CD4-positive, alpha-beta T cell (primary cell): ENCODE measurements at regions of chr1 and their contacts with region 1.

Region 1: DNA sequence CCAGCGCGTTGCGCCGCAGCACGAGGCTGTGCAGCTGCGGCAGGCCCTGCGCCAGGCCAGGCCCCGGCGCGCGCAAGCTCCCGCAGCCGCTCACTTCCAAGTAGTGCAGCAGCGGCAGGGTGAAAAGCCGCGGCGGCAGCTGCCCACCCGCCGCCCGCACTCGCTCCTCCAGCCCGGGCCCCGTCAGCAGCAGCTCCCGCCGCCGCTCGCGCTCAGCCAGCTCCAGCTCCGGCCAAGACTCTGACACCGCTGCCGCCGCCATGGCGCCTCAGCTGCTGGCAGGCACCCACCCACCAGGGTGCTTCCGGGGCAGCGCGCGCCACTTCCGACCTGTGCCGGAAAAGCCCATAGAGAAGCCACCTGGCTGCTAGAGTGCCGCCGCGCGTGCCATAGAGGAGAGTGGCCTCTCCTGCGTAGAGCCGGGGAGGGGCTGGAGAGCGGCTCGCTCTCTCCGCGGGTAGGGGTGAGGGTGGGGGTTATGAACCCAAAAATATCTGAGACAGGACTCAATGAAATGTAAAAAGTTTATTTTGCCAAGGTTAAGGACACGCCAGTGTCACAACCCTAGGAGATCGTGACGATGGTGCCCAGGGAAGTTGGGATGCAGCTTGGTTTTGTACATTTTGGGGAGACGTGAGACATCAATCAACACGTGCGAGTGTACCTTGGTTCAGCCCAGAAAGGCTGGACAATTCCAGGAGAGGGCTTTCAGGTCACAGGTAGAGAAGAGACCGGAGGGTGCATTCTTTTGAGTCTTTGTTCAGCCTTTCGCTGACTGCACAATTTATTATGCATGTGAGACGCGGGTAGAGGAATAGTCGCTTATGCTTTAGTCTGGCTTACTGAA is at the start of gene LRRC47:
- DNase-seq: peak; percentile 92 to 96 (median 94)
- ATAC-seq: peak; percentile 100
- H3K4me3 ChIP-seq: peak within 1 kb of the TSS; percentile 73
- H3K4me3 Mint-ChIP-seq: peak within 1 kb of the TSS; percentile 95
- H3K27ac ChIP-seq: peak within 1 kb of the TSS in 1 of 2 donors; percentile 52
- H3K27ac Mint-ChIP-seq: peak within 1 kb of the TSS; percentile 82
- H3K4me1 ChIP-seq: peaks cover 40% of the 10 kb centered on the region
- H3K4me1 Mint-ChIP-seq: peaks cover 54% of the 10 kb centered on the region
- H3K27me3 ChIP-seq: peaks cover 4 to 7% of the 10 kb centered on the region in 2 experiments
- H3K27me3 Mint-ChIP-seq: peaks cover 18% of the 10 kb centered on the region
- CTCF ChIP-seq: no peak
- total RNA-seq, gene LRRC47: 30.1 to 32.0 TPM

Region 2: DNA sequence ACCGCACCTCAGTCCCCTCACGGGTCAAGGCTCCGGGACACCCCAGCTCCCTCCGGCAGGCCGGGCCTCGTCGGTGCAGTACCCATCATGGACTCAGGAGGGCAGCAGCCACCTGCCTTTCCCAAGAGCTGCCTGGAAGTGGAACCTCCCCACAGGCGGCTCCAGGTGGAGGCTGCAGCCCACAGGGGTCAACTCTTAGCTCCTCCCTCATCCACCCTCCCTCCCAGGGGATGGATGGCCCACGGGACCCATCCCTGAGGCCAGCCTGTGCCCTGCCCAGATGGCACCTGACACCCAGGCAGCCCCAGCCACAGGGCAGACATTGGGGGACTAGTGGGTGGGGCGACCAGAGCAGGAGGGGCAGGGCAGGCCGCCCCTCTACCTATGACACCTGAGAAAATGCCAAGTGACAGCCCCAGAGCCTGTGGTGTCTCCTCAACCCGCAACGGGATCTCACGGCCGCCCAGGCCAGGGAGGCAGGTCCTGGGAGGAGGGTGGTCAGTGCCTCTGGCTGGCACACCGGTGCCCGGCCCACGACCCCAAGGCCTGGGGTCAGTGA is 343.2 kb before region 1 on chr1:
- CTCF ChIA-PET with region 1: interaction called, 3 read pairs
- POLR2A ChIA-PET with region 1: no interaction called
- intact Hi-C with region 1: loop called in 1 of 2 experiments (anchors 5 kb)
- DNase-seq: peak; percentile 58 to 83 (median 68)
- ATAC-seq: peak; percentile 85
- H3K4me3 ChIP-seq: no peak overlapping the region
- H3K4me3 Mint-ChIP-seq: peak overlapping the region; percentile 81
- H3K27ac ChIP-seq: no peak overlapping the region
- H3K27ac Mint-ChIP-seq: no peak overlapping the region
- H3K4me1 ChIP-seq: peaks cover 22% of the 10 kb centered on the region
- H3K4me1 Mint-ChIP-seq: peaks cover 3% of the 10 kb centered on the region
- H3K27me3 ChIP-seq: peaks cover 19 to 21% of the 10 kb centered on the region in 2 experiments
- H3K27me3 Mint-ChIP-seq: peaks cover 18% of the 10 kb centered on the region
- CTCF ChIP-seq: peak; percentile 93

Region 3: GRCh38 chr1:3639397-3639911 is 157.0 kb before region 1 on chr1:
- CTCF ChIA-PET with region 1: no interaction called
- POLR2A ChIA-PET with region 1: no interaction called
- intact Hi-C with region 1: no loop called
- DNase-seq: no peak
- ATAC-seq: no peak
- H3K4me3 ChIP-seq: no peak overlapping the region
- H3K4me3 Mint-ChIP-seq: no peak overlapping the region
- H3K27ac ChIP-seq: no peak overlapping the region
- H3K27ac Mint-ChIP-seq: no peak overlapping the region
- H3K4me1 ChIP-seq: no peaks in the 10 kb centered on the region
- H3K4me1 Mint-ChIP-seq: no peaks in the 10 kb centered on the region
- H3K27me3 ChIP-seq: no peaks in the 10 kb centered on the region
- H3K27me3 Mint-ChIP-seq: no peaks in the 10 kb centered on the region
- CTCF ChIP-seq: no peak

Region 4: DNA sequence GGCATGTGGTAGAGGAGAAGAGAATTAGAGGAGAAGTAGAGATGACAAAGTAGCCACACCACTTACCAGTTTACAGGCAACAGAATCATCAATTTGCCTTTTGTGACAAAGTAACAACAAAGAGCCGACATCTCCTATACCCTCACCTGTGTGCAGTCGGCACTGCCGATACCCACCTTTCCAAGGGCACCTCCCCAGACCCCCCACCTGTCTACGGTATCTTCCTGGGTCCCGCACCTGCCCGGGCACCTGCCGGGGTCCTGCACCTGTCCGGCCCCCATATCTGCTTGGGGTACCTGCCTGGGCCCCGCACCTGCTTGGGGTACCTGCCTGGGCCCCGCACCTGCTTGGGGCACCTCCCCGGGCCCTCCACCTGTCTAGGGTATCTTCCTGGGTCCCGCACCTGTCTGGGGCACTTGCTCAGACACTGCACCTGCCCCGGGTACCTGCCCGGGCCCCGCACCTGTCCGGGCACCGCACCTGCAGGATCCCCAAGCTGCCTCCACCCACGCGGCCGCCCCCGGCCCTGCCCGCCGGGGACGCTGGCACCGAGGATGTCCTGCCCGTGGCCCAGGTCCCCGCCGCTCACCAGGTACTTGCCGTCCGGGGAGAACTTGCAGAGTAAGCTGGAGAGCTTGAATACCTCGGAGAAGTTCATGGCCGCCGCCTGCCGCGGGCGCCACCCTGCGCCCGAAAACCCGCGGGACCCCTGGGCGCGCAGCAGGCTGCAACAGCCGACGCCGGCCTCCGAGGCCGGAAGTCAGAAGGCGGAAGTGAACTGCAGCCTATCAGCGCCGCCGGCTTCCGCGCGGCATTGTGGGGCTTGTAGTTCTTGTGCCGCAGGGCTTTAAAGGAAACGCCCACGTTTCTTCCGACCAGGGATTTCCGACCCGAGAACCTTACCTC is 146.8 kb before region 1 on chr1 and contains the start of gene WRAP73:
- CTCF ChIA-PET with region 1: no interaction called
- POLR2A ChIA-PET with region 1: no interaction called
- intact Hi-C with region 1: loop called in 1 of 2 experiments (anchors 2 kb)
- DNase-seq: peak; percentile 79 to 96 (median 85)
- ATAC-seq: peak; percentile 97
- H3K4me3 ChIP-seq: peak within 1 kb of the TSS; percentile 84
- H3K4me3 Mint-ChIP-seq: peak within 1 kb of the TSS; percentile 86
- H3K27ac ChIP-seq: peak within 1 kb of the TSS in 1 of 2 donors; percentile 50
- H3K27ac Mint-ChIP-seq: peak within 1 kb of the TSS; percentile 32
- H3K4me1 ChIP-seq: peaks cover 37% of the 10 kb centered on the region
- H3K4me1 Mint-ChIP-seq: peaks cover 37% of the 10 kb centered on the region
- H3K27me3 ChIP-seq: peaks cover 31 to 34% of the 10 kb centered on the region in 2 experiments
- H3K27me3 Mint-ChIP-seq: peaks cover 32% of the 10 kb centered on the region
- CTCF ChIP-seq: no peak
- total RNA-seq, gene WRAP73: 22.3 to 22.7 TPM

Region 5: GRCh38 chr1:3668585-3669300 is 127.7 kb before region 1 on chr1:
- CTCF ChIA-PET with region 1: no interaction called
- POLR2A ChIA-PET with region 1: no interaction called
- intact Hi-C with region 1: no loop called
- DNase-seq: peak in 2 of 14 experiments; percentile 47 to 51
- ATAC-seq: no peak
- H3K4me3 ChIP-seq: no peak overlapping the region
- H3K4me3 Mint-ChIP-seq: no peak overlapping the region
- H3K27ac ChIP-seq: no peak overlapping the region
- H3K27ac Mint-ChIP-seq: no peak overlapping the region
- H3K4me1 ChIP-seq: peaks cover 4% of the 10 kb centered on the region
- H3K4me1 Mint-ChIP-seq: no peaks in the 10 kb centered on the region
- H3K27me3 ChIP-seq: peaks cover 0 to 7% of the 10 kb centered on the region in 2 experiments
- H3K27me3 Mint-ChIP-seq: peaks cover 13% of the 10 kb centered on the region
- CTCF ChIP-seq: no peak

Region 6: DNA sequence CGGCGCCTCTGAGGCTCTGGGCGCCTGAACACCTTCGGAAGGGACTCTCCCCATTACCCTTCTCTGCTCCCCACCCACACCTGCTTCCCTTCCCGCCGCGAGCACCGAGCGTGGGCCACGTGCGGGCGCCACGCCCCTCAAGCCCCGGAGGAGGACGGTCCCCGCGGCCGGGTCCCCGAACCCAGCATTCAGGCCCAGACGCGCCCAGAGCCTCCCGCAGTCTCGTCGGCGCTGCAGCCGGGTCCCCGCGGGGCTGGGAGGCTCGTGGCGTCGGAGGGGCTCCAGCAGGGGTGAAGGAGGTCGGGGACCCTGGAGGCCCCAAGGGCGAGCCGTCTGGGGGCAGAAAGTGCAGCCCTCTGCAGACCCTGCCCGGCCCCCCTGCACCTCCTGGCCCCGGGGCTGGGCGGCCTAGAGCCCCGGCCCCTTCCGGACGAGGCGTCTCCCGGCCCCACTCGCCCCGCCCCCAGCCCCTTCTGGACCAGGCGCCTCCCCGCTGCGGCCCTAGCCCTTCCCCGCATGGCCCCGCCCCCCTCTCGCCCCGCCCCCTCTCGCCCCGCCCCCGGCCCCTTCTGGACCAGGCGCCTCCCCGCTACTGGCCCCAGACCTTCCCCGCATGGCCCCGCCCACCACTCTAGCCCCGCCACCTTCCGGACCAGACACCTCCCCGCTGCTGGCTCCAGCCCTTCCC is 24.3 kb before region 1 on chr1:
- CTCF ChIA-PET with region 1: interaction called, 16 read pairs
- POLR2A ChIA-PET with region 1: interaction called, 7 read pairs
- intact Hi-C with region 1: loop called in 1 of 2 experiments (anchors 1 kb)
- DNase-seq: peak; percentile 73 to 97 (median 88)
- ATAC-seq: peak; percentile 77
- H3K4me3 ChIP-seq: peak overlapping the region; percentile 55
- H3K4me3 Mint-ChIP-seq: peak overlapping the region; percentile 80
- H3K27ac ChIP-seq: no peak overlapping the region
- H3K27ac Mint-ChIP-seq: no peak overlapping the region
- H3K4me1 ChIP-seq: peaks cover 33% of the 10 kb centered on the region
- H3K4me1 Mint-ChIP-seq: peaks cover 5% of the 10 kb centered on the region
- H3K27me3 ChIP-seq: no peaks in the 10 kb centered on the region
- H3K27me3 Mint-ChIP-seq: peaks cover 5% of the 10 kb centered on the region
- CTCF ChIP-seq: no peak

Region 7: GRCh38 chr1:3900119-3900968 is 103.9 kb after region 1 on chr1 and contains the start of gene C1orf174:
- CTCF ChIA-PET with region 1: no interaction called
- POLR2A ChIA-PET with region 1: interaction called, 19 read pairs
- intact Hi-C with region 1: loop called in 1 of 2 experiments (anchors 1 kb)
- DNase-seq: peak; percentile 87 to 99 (median 92)
- ATAC-seq: peak; percentile 83
- H3K4me3 ChIP-seq: peak within 1 kb of the TSS; percentile 85
- H3K4me3 Mint-ChIP-seq: peak within 1 kb of the TSS; percentile 93
- H3K27ac ChIP-seq: peak within 1 kb of the TSS; percentile 81 to 96
- H3K27ac Mint-ChIP-seq: peak within 1 kb of the TSS; percentile 90
- H3K4me1 ChIP-seq: peaks cover 47% of the 10 kb centered on the region
- H3K4me1 Mint-ChIP-seq: peaks cover 69% of the 10 kb centered on the region
- H3K27me3 ChIP-seq: no peaks in the 10 kb centered on the region
- H3K27me3 Mint-ChIP-seq: no peaks in the 10 kb centered on the region
- CTCF ChIP-seq: no peak
- total RNA-seq, gene C1orf174: 16.8 to 18.5 TPM

Region 8: GRCh38 chr1:3910857-3911845 is 114.7 kb after region 1 on chr1:
- CTCF ChIA-PET with region 1: no interaction called
- POLR2A ChIA-PET with region 1: no interaction called
- intact Hi-C with region 1: no loop called
- DNase-seq: peak; percentile 68 to 86 (median 74)
- ATAC-seq: peak; percentile 87
- H3K4me3 ChIP-seq: no peak overlapping the region
- H3K4me3 Mint-ChIP-seq: no peak overlapping the region
- H3K27ac ChIP-seq: no peak overlapping the region
- H3K27ac Mint-ChIP-seq: no peak overlapping the region
- H3K4me1 ChIP-seq: peaks cover 17% of the 10 kb centered on the region
- H3K4me1 Mint-ChIP-seq: peaks cover under 1% of the 10 kb centered on the region
- H3K27me3 ChIP-seq: peaks cover 0 to 2% of the 10 kb centered on the region in 2 experiments
- H3K27me3 Mint-ChIP-seq: no peaks in the 10 kb centered on the region
- CTCF ChIP-seq: peak; percentile 76